Endothelial cell of umbilical vein (primary cell): ENCODE measurements at regions of chr4 and their contacts with region 1.

Region 1: DNA sequence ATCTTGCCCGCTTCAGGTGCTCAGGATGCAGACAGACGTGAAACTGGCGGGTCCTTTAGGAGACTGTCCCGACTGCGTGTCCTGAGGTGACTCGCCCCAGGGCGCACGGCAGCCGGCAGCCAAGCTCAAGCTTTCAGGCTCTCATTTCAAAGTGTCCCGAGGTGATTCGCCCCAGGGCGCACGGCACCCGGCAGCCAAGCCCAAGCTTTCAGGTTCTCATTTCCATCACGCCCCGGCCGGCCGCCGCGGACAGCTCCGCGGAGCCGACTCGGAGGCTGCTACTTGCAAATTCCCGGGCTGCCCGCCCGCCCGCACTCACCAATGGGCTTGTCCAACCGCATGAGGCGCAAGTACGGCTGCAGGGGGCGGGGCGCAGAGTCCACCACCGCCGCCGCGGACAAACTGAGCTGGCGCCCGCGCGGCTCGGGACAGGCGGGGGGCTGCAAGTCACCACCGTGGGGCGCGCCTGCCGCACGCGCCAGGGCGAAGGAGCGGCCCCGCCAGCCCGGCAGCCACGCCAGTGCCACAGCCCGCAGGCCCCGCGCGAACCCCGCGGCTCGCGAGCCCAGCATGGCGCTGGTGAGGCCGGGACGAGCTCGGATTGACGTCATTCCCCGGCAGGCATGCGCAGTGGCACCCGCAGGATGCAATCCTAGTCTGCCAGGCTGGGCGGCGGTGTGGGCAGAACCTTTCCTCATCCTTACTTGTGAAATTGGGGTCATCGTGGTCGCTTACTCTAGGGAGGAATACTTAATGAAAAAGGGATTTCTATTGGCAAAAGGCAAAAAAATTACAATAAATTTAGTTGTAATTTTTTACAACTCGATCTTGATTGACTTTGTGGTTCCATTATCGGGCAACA is at the start of gene COQ2:
- DNase-seq: peak; percentile 96
- H3K4me3 ChIP-seq: peak within 1 kb of the TSS; percentile 35 to 82 (median 52)
- H3K27ac ChIP-seq: peak within 1 kb of the TSS; percentile 87
- H3K4me1 ChIP-seq: peaks cover 23% of the 10 kb centered on the region
- H3K27me3 ChIP-seq: no peaks in the 10 kb centered on the region
- CTCF ChIP-seq: peak in 1 of 2 donors; percentile 26
- POLR2A ChIP-seq: peak; percentile 92
- total RNA-seq, gene COQ2: 26.4 and 28.0 TPM in 2 replicates

Region 2: DNA sequence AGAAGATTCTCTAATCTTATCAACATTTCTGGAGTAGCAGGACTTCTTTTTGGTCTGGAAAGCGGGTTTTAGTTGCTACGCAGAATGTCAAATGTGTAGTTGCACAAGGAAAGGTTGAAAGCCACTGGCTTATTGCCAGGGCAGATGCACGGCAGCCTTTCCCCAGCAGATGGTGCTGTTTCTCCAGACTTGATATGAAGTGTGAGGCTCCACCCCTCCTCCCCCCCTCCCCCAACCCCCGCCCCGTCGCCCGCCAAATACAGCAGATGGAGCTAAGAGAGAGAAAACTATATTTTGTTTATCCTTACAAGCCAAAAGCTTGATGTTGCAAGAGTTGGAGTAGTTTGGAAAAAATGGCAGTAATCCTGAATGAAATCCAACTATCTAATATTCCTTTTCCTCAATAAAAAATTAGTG is 822.0 kb before region 1 on chr4:
- CTCF ChIA-PET with region 1: interaction called, 6 read pairs
- POLR2A ChIA-PET with region 1: no interaction called
- dilution Hi-C with region 1: no loop called
- intact Hi-C with region 1: loop called (anchors 5 kb)
- DNase-seq: peak; percentile 86
- H3K4me3 ChIP-seq: no peak overlapping the region
- H3K27ac ChIP-seq: no peak overlapping the region
- H3K4me1 ChIP-seq: no peaks in the 10 kb centered on the region
- H3K27me3 ChIP-seq: no peaks in the 10 kb centered on the region
- CTCF ChIP-seq: peak; percentile 62 to 80
- POLR2A ChIP-seq: no peak

Region 3: GRCh38 chr4:83012687-83013419 is 271.6 kb before region 1 on chr4:
- CTCF ChIA-PET with region 1: interaction called, 18 read pairs
- POLR2A ChIA-PET with region 1: no interaction called
- dilution Hi-C with region 1: no loop called
- intact Hi-C with region 1: no loop called
- DNase-seq: peak; percentile 99
- H3K4me3 ChIP-seq: peak overlapping the region; percentile 80 to 97 (median 83)
- H3K27ac ChIP-seq: peak overlapping the region; percentile 71
- H3K4me1 ChIP-seq: peaks cover 19% of the 10 kb centered on the region
- H3K27me3 ChIP-seq: no peaks in the 10 kb centered on the region
- CTCF ChIP-seq: peak; percentile 39 to 70
- POLR2A ChIP-seq: peak; percentile 37

Region 4: DNA sequence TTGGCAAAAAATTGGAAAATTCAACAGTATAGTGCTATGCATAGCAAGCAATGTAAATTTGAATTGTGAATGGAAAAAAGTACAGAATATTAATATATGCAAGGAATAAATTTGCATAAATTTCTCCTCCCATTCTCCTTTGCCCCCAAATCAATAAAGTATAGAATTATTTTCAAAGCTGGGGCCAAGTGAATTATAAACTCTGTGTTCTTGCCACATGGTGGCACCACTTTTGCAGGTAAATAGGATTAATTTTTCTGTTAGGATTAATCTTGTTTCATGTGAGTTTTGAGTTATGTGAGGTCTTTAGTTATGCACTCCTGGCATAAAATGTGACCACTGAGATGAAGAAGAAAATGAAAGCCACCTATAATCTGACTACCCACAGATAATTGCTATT is 229.5 kb before region 1 on chr4:
- CTCF ChIA-PET with region 1: interaction called, 146 read pairs
- POLR2A ChIA-PET with region 1: no interaction called
- dilution Hi-C with region 1: no loop called
- intact Hi-C with region 1: loop called (anchors 1 kb)
- DNase-seq: peak; percentile 40
- H3K4me3 ChIP-seq: no peak overlapping the region
- H3K27ac ChIP-seq: no peak overlapping the region
- H3K4me1 ChIP-seq: no peaks in the 10 kb centered on the region
- H3K27me3 ChIP-seq: no peaks in the 10 kb centered on the region
- CTCF ChIP-seq: peak; percentile 11 to 17
- POLR2A ChIP-seq: no peak

Region 5: GRCh38 chr4:83174844-83175414 is 109.5 kb before region 1 on chr4:
- CTCF ChIA-PET with region 1: no interaction called
- POLR2A ChIA-PET with region 1: no interaction called
- dilution Hi-C with region 1: no loop called
- intact Hi-C with region 1: no loop called
- DNase-seq: no peak
- H3K4me3 ChIP-seq: no peak overlapping the region
- H3K27ac ChIP-seq: no peak overlapping the region
- H3K4me1 ChIP-seq: peaks cover 7% of the 10 kb centered on the region
- H3K27me3 ChIP-seq: no peaks in the 10 kb centered on the region
- CTCF ChIP-seq: no peak
- POLR2A ChIP-seq: no peak

Region 6: DNA sequence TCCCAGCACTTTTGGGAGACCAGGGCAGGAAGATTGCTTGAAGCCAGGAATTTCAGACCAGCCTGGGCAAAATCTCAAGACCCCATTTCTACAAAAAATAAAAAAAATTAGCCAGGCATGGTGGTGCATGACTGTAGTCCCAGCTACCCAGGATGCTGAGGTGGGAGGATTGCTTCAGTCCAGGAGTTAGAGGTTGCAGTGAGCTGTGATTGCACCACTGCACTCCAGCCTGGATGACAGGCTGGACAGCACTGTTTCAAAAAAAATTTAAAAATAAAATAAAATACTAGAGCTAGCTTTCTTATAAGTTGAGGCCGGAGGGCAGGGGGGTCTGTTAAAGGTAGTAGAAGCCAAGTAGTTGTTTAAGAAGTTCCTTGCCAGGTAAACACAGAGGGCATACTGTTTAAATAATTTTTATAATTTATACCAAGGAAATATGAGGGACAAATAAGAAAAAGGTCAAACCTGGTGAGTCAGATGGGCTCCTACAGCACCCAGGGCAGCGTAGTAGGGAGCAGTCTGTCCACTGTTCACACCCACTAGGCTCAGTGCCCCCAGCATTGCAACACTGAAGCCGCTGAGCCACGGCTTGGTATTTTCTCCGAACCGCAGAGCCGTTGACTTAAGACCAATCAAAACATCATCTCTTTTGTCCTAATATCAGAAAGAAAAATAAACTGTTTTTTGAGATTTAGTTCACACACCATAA is 17.1 kb before region 1 on chr4:
- CTCF ChIA-PET with region 1: interaction called, 39 read pairs
- POLR2A ChIA-PET with region 1: no interaction called
- dilution Hi-C with region 1: no loop called
- intact Hi-C with region 1: no loop called
- DNase-seq: peak; percentile 36
- H3K4me3 ChIP-seq: no peak overlapping the region
- H3K27ac ChIP-seq: no peak overlapping the region
- H3K4me1 ChIP-seq: peaks cover 5% of the 10 kb centered on the region
- H3K27me3 ChIP-seq: no peaks in the 10 kb centered on the region
- CTCF ChIP-seq: no peak
- POLR2A ChIP-seq: no peak

Region 7: GRCh38 chr4:83328521-83329187 is 44.2 kb after region 1 on chr4:
- CTCF ChIA-PET with region 1: interaction called, 14 read pairs
- POLR2A ChIA-PET with region 1: interaction called, 3 read pairs
- dilution Hi-C with region 1: no loop called
- intact Hi-C with region 1: loop called (anchors 2 kb)
- DNase-seq: peak; percentile 37
- H3K4me3 ChIP-seq: peak overlapping the region in 1 of 3 experiments; percentile 10
- H3K27ac ChIP-seq: peak overlapping the region; percentile 30
- H3K4me1 ChIP-seq: peaks cover 22% of the 10 kb centered on the region
- H3K27me3 ChIP-seq: no peaks in the 10 kb centered on the region
- CTCF ChIP-seq: peak in 1 of 2 donors; percentile 10
- POLR2A ChIP-seq: no peak

Region 8: DNA sequence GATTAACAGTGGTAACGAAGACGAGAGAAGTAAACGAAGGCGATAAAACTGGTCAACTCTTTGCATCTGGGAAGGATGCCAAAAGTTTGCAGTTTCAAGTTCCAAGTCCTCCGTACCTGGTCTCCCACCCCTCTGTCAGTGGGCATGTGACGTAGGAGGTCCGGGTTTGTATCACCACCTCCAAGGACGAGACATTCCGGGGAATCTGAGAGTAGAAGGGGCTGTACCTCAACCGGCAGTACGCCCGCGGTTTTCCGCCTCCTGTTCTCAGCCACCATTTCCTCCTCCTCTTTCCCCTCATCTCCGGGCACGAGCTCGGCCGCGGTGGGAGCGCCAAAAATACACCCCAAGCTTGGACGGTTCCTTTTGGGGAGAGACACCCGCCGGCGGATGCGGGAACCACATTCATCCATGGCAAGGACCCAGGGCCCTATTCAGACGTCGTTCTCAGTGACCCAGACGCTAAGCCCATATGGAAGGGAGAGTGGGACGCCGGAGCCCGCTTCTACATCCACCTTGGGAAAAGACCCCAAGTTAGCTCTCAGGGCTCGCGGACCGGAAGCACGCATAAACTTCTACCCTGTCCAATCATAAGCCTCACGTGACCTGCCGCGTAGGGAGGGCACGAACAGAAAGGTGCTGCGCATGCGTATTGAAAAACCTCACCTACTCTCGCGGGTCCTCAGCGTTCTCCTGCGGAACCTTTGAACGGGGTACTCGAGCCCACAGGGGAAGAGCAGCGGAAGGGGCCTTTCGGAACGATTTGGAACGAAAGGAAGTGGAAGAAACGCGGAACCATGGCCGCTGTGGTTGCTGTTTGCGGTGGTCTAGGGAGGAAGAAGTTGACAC is 171.1 kb after region 1 on chr4 and contains the starts of genes HELQ and MRPS18C:
- CTCF ChIA-PET with region 1: interaction called, 37 read pairs
- POLR2A ChIA-PET with region 1: interaction called, 3 read pairs
- dilution Hi-C with region 1: no loop called
- intact Hi-C with region 1: loop called (anchors 1 kb)
- DNase-seq: peak; percentile 99
- H3K4me3 ChIP-seq: peak within 1 kb of the TSS; percentile 59 to 94 (median 75)
- H3K27ac ChIP-seq: peak within 1 kb of the TSS; percentile 88
- H3K4me1 ChIP-seq: peaks cover 20% of the 10 kb centered on the region
- H3K27me3 ChIP-seq: no peaks in the 10 kb centered on the region
- CTCF ChIP-seq: no peak
- POLR2A ChIP-seq: peak; percentile 93
- total RNA-seq, gene HELQ: 11.0 and 11.1 TPM in 2 replicates
- total RNA-seq, gene MRPS18C: 58.4 and 64.8 TPM in 2 replicates